ENCODE measurements at regions of chr7 and their contacts with region 1.

Region 1: GRCh38 chr7:77409739-77410547 is 6.2 kb downstream of the GSAP start:
- DNase-seq: peak; percentile 81
- ATAC-seq: peak; percentile 57
- H3K4me3 ChIP-seq: peak overlapping the region; percentile 53
- H3K27ac ChIP-seq: peak overlapping the region; percentile 86
- H3K4me1 ChIP-seq: peaks cover 50% of the 10 kb centered on the region
- H3K27me3 ChIP-seq: no peaks in the 10 kb centered on the region
- CTCF ChIP-seq: no peak

Region 2: DNA sequence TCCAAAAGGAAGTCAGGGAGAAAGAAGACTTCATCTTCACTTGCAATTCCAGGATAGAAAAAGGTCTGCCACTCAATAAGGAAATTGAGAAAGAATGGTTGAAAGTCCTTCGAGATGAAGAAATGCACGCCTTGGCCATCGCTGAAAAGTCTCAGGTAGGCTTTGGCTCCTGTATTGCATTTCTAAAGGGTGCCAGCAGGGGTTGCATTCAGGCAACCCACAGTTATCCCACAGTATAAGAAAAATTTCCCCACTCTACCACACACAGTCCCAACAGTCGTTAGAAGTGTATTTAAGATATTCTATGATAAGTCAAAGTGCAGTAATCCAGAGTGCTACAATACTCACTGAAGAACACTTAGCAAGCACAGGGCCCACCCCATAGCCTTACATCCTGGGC is 116.9 kb before region 1 on chr7:
- CTCF ChIA-PET with region 1: no interaction called
- POLR2A ChIA-PET with region 1: no interaction called
- intact Hi-C with region 1: no loop called
- DNase-seq: no peak
- ATAC-seq: no peak
- H3K4me3 ChIP-seq: no peak overlapping the region
- H3K27ac ChIP-seq: no peak overlapping the region
- H3K4me1 ChIP-seq: no peaks in the 10 kb centered on the region
- H3K27me3 ChIP-seq: no peaks in the 10 kb centered on the region
- CTCF ChIP-seq: peak; percentile 27

Region 3: DNA sequence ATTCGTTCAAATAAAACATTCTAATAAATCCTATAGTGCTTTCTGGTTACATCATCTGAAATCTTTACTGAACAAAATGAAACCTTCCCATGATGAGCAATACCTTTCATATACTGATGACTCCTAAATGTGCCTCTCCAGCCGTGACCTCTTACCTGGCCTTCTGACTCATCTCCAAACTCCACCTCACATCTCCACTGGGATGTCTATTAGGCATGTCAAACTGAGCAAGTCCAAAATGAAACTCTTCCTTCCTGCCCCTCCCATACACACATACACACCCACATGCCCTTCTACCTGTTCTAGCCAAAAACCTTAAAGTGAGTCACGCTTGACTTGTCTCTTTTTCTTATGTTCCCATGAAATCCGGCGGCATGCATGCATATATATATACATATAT is 16.7 kb before region 1 on chr7:
- CTCF ChIA-PET with region 1: no interaction called
- POLR2A ChIA-PET with region 1: no interaction called
- intact Hi-C with region 1: loop called (anchors 1 kb)
- DNase-seq: peak; percentile 96
- ATAC-seq: peak; percentile 98
- H3K4me3 ChIP-seq: no peak overlapping the region
- H3K27ac ChIP-seq: peak overlapping the region; percentile 88
- H3K4me1 ChIP-seq: peaks cover 25% of the 10 kb centered on the region
- H3K27me3 ChIP-seq: no peaks in the 10 kb centered on the region
- CTCF ChIP-seq: no peak